Activated CD4-positive, alpha-beta T cell treated with anti-CD3 and anti-CD28 coated beads, Interleukin-2, amount 10 ng/mL, durations not matched to agents 24 days and 14 days (primary cell): ENCODE measurements at regions of chr21 and their contacts with region 1.

Region 1: GRCh38 chr21:41899426-41900202 is 20.5 kb upstream of the PRDM15 start:
- DNase-seq: peak; percentile 76
- H3K4me3 Mint-ChIP-seq: peak overlapping the region; percentile 61
- H3K27ac Mint-ChIP-seq: peak overlapping the region; percentile 84
- H3K4me1 Mint-ChIP-seq: peaks cover 28% of the 10 kb centered on the region
- H3K27me3 Mint-ChIP-seq: no peaks in the 10 kb centered on the region

Region 2: DNA sequence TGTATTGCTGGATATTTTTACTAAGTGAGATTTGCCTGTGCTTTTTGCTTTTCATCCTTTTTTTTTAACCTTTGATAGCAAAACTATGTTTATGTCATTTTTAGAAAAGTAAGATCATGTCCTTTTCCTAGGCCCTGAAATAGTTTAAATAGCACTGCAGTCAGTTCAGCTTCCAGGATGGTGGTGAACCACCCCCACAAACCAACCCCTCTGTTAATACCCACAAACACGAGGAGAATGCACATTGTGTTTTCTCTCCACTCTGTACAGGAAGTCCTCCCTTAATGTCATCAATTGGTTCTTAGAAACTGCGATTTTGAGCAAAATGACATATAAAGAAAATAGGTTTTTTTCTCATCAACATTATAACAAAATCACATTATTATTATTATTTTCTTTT is 934.9 kb before region 1 on chr21:
- intact Hi-C with region 1: no loop called
- DNase-seq: no peak
- H3K4me3 Mint-ChIP-seq: no peak overlapping the region
- H3K27ac Mint-ChIP-seq: no peak overlapping the region
- H3K4me1 Mint-ChIP-seq: no peaks in the 10 kb centered on the region
- H3K27me3 Mint-ChIP-seq: no peaks in the 10 kb centered on the region

Region 3: DNA sequence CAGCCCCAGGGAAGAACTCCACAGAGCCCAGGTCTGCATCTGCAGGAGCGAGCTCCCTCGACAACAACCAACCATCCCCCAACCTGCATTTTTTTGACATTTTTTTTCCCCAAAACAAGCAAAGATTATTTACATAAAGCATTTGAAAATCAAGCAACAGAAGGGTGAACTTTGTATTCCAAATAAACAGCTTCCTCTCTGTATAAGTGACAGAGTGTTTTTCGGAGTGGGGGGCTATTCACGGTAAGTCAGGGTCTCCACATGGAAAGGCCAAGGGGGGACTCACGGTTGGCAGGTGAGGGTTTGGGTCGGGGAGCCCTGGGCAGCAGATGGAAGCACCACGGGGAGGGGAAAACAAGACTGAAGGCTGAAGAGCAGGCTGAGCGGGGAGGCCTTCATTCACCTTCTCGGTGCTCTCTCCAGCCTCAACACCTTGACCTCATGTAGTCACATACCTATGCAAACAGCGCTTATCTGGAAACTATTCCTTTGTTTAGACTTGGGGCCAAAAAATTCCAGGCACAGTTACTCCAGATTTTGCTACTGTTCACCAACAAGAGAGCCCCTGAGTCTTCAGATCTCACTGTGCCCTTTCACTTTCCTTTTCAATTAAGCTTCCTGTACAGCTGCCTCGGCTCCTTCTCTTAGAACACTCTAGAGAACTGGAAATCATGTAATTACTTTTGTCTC is 26.6 kb after region 1 on chr21:
- intact Hi-C with region 1: loop called (anchors 2 kb)
- DNase-seq: peak; percentile 84
- H3K4me3 Mint-ChIP-seq: peak overlapping the region; percentile 90
- H3K27ac Mint-ChIP-seq: peak overlapping the region; percentile 96
- H3K4me1 Mint-ChIP-seq: peaks cover 53% of the 10 kb centered on the region
- H3K27me3 Mint-ChIP-seq: no peaks in the 10 kb centered on the region